Activated naive CD4-positive, alpha-beta T cell treated with anti-CD3 and anti-CD28 coated beads for 36 hours (primary cell): ENCODE measurements at regions of chr3 and their contacts with region 1.

Region 1: DNA sequence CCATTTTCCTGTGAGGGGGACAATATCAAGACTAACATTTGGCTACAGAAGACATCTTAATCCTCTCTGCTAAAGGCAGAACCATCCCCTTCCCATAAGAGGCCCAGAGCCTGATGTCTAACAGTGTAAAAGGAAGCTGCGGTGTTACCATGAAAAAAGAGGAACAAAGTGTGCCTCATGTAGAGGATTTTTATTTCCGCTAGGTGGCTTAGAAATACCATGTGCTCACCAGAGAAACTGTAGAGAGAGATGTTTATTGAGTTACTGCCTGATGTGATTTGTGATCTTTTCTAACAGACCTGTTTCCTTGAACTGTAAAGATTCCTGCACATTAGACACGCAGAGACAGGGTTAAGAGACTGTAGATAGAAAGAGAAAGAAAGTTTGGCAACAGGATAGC is 22.0 kb downstream of the OR5H15 start:
- DNase-seq: no peak
- H3K4me3 Mint-ChIP-seq: no peak overlapping the region
- H3K27ac Mint-ChIP-seq: no peak overlapping the region
- H3K4me1 Mint-ChIP-seq: peaks cover 4% of the 10 kb centered on the region
- H3K27me3 Mint-ChIP-seq: peaks cover 6% of the 10 kb centered on the region

Region 2: DNA sequence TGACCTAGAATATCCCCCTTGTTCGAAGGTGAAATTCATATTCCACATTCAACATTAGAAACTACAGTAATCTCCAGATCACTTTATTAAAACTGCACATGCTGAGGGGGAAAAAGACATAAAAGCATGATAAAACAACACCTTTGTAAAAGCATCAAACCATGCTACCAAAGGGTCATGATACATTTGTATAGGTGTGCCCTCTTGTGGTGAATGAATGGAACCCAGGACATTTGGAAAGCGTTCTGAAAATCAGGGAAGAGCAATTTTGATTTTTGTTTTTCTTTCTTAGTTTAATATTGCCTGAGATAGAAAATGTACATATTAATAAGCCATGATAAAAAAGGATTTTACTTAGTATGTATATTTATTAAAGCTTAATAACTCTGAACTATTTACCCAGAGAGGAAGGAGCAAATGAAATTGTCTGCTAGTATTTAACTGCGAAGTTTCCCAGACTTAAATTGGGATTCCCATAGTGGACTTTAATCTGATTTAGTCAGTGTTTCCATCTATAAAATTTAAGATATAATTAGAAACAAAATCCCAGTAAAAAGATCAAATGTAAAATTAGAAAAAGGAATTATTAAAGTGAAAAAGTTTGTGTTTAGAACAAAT is 529.8 kb before region 1 on chr3:
- CTCF ChIA-PET with region 1: no interaction called
- intact Hi-C with region 1: no loop called
- DNase-seq: no peak
- H3K4me3 Mint-ChIP-seq: no peak overlapping the region
- H3K27ac Mint-ChIP-seq: no peak overlapping the region
- H3K4me1 Mint-ChIP-seq: no peaks in the 10 kb centered on the region
- H3K27me3 Mint-ChIP-seq: peaks cover 3% of the 10 kb centered on the region

Region 3: GRCh38 chr3:98130421-98130820 is 58.1 kb before region 1 on chr3 and contains the start of gene OR5H1:
- CTCF ChIA-PET with region 1: no interaction called
- intact Hi-C with region 1: no loop called
- DNase-seq: no peak
- H3K4me3 Mint-ChIP-seq: no peak within 1 kb of the TSS
- H3K27ac Mint-ChIP-seq: no peak within 1 kb of the TSS
- H3K4me1 Mint-ChIP-seq: no peaks in the 10 kb centered on the region
- H3K27me3 Mint-ChIP-seq: no peaks in the 10 kb centered on the region
- total RNA-seq, gene OR5H1: not detected

Region 4: DNA sequence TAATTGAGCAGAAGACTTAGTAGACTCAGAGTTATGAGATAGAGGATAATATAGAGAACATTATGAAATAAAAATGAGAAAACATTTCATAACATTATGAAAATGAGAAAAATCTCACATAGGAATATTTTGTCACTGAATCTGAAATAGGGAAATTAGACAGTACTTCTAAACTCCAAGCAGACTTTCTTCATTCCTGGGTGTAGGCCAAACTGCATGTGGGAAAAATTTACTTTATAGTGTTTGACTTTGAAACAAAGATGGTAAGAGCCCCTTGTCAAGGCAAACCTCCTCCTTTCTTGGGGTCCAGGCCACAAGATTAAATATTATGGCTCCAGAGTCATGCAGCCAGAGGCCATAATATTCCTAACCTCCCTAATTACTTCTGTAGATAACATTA is 48.0 kb before region 1 on chr3:
- CTCF ChIA-PET with region 1: no interaction called
- intact Hi-C with region 1: loop called (anchors 1 kb)
- DNase-seq: no peak
- H3K4me3 Mint-ChIP-seq: no peak overlapping the region
- H3K27ac Mint-ChIP-seq: no peak overlapping the region
- H3K4me1 Mint-ChIP-seq: no peaks in the 10 kb centered on the region
- H3K27me3 Mint-ChIP-seq: no peaks in the 10 kb centered on the region

Region 5: GRCh38 chr3:98246142-98246541 is 57.6 kb after region 1 on chr3:
- CTCF ChIA-PET with region 1: no interaction called
- intact Hi-C with region 1: no loop called
- DNase-seq: no peak
- H3K4me3 Mint-ChIP-seq: no peak overlapping the region
- H3K27ac Mint-ChIP-seq: no peak overlapping the region
- H3K4me1 Mint-ChIP-seq: no peaks in the 10 kb centered on the region
- H3K27me3 Mint-ChIP-seq: no peaks in the 10 kb centered on the region

Region 6: GRCh38 chr3:98573181-98573728 is 384.7 kb after region 1 on chr3:
- CTCF ChIA-PET with region 1: no interaction called
- intact Hi-C with region 1: loop called (anchors 10 kb)
- DNase-seq: no peak
- H3K4me3 Mint-ChIP-seq: no peak overlapping the region
- H3K27ac Mint-ChIP-seq: peak overlapping the region; percentile 47
- H3K4me1 Mint-ChIP-seq: peaks cover 19% of the 10 kb centered on the region
- H3K27me3 Mint-ChIP-seq: no peaks in the 10 kb centered on the region